ENCODE measurements at regions of chr15 and their contacts with region 1.

Region 1: DNA sequence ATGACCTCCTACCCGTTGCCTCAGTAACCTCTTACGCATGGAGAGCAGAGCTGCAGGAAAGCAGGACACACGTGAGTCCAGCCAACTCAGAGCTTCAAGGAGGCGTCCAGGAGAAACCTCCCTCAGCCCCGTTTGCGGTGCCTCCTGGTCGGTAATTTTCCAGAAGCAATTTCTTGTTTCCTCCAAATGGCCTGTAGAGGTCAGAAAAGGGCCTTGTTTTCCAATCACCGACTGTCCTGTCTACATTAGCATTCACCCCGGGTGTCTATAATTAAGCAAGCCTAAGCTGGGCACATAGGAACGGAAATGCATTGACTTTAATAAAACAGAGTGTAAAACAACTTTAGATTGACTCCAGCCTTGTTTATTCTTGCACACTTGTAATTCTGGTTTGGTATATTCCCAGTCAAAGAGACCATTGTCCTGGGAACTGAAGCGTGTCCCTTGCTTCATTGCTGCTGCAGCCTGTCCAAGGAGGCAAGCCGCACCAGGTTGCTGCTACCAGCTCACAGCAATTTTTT is 836.2 kb downstream of the AGBL1 start:
- DNase-seq: peak in 2 of 6 donors; percentile 21 to 23
- ATAC-seq: peak; percentile 43 to 83 (median 78)
- H3K4me3 ChIP-seq: no peak overlapping the region
- H3K27ac ChIP-seq: no peak overlapping the region
- H3K4me1 ChIP-seq: no peaks in the 10 kb centered on the region
- H3K27me3 ChIP-seq: no peaks in the 10 kb centered on the region
- CTCF ChIP-seq: peak in 2 of 4 donors; percentile 9 to 14

Region 2: DNA sequence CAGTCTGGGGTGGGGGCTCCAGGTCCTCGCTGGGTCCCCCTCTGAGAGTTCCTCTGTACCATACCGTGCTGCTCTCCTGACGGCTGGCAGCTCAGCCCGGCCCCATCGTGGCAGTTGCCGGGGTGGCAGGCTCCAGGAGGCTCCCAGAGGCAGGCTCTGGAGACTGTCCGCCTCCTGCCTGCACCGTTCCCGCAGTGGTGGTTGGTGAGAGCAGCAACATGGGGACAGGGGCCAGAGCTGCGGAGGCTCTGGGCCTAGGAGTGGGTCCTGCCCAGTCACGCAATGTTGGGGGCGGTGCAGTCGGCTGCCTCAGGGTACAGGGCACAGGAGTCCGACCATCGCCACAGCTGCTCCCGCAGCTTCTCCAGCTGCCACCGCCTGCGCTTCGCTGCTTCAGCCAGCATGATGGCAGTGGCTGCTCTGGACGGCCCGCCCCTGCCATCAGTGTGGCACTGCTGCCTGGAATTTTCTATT is 343.5 kb before region 1 on chr15:
- intact Hi-C with region 1: no loop called
- DNase-seq: peak in 1 of 6 donors; percentile 36
- ATAC-seq: no peak
- H3K4me3 ChIP-seq: no peak overlapping the region
- H3K27ac ChIP-seq: no peak overlapping the region
- H3K4me1 ChIP-seq: no peaks in the 10 kb centered on the region
- H3K27me3 ChIP-seq: peaks cover 0 to 3% (median 0%) of the 10 kb centered on the region in 4 donors
- CTCF ChIP-seq: no peak

Region 3: DNA sequence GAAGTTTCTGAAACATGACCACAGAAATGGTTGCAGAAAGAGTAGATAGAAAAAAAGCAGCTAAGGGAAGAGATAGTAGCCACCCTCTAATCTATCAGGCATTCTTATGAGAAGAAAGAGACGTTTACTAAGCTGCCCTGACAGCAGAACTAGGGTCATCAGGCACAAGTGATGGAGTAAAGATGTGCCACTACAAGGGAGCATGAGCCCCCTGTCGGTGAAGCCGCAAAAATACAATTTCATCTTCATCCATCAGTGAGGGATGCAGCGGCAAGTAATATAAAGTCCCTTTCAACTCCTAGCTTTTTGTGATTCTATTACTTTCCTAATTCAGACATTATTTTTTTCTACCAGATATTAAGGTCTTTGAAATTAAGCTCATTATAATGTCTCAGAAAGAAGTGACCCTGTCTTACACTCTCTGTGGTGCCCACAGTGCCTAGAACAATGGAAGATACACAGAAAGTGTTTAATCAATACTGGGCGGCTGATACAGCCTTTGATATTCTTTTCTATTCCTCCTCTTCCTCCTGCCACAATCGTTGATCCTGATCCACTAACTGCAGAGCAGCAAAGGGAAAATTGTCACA is 689.1 kb after region 1 on chr15:
- intact Hi-C with region 1: loop called in 1 of 3 experiments (anchors 10 kb)
- DNase-seq: no peak
- ATAC-seq: no peak
- H3K4me3 ChIP-seq: no peak overlapping the region
- H3K27ac ChIP-seq: no peak overlapping the region
- H3K4me1 ChIP-seq: no peaks in the 10 kb centered on the region
- H3K27me3 ChIP-seq: peaks cover 0 to 13% (median 2%) of the 10 kb centered on the region in 4 donors
- CTCF ChIP-seq: peak in 3 of 4 donors; percentile 20 to 42 (median 35)

Region 4: GRCh38 chr15:88246666-88247446 is 1331.0 kb after region 1 on chr15:
- intact Hi-C with region 1: loop called in 2 of 3 experiments (anchors 10 kb)
- DNase-seq: peak; percentile 43 to 91 (median 72)
- ATAC-seq: peak; percentile 77 to 96 (median 92)
- H3K4me3 ChIP-seq: no peak overlapping the region
- H3K27ac ChIP-seq: no peak overlapping the region
- H3K4me1 ChIP-seq: no peaks in the 10 kb centered on the region
- H3K27me3 ChIP-seq: peaks cover 0 to 4% (median 1%) of the 10 kb centered on the region in 4 donors
- CTCF ChIP-seq: peak; percentile 92 to 98 (median 96)